Heart left ventricle (tissue), 16 donors: ENCODE measurements at regions of chr20 and their contacts with region 1.

Region 1: DNA sequence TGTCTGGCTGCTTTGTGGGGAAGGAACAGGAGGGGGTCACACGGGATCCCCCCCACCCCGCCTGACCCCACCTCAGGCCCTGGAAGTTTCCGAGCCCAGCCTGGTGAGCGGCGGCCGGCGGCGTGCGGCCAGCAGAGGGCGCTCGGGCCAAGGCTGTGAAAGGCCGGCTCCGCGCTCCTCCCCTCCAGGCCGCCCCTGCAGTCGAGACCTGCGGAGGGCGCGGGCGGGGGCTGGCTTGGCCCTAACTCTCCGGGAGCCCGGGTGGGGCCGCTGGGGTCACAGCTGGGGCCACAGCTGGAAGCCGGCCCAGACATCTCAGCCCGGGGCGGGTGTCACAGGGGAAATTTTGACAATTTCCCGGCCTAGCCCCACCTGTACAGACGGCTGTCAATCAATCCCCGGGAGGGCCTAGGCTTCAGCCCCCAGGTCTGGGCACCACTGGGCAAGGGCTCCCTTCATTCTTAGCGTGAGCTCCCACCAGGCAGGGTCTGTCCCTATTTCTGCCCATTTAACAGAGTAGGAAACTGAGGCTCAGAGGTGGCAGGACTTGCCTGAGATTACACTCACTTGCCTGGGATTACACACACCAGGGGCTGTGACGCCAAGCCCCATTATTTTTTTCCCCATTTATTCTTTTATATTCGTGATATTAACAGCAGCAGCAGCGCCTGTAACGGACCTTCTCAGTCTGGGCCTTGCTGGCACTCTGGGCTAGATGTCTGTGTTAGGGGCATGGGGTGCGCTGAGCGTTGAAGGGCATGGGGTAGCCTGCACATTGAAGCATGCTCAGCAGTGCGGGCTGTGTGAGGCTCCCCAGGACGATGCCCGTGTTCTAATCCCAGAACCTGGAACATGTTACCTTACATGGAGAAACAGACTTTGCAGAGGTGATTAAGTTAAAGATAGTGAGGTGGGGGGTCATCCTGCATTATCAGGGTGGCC is 23.0 kb downstream of the ZBP1 start:
- DNase-seq: peak; percentile 62 to 86 (median 74)
- ATAC-seq: peak; percentile 67 to 87 (median 80)
- H3K4me3 ChIP-seq: peak overlapping the region in 3 of 12 donors; percentile 20 to 27 (median 23)
- H3K27ac ChIP-seq: no peak overlapping the region
- H3K4me1 ChIP-seq: peaks cover 0 to 8% (median 5%) of the 10 kb centered on the region in 12 donors
- H3K27me3 ChIP-seq: peaks cover 0 to 5% (median 0%) of the 10 kb centered on the region in 9 donors
- CTCF ChIP-seq: peak; percentile 90 to 96 (median 94)
- POLR2A ChIP-seq: no peak

Region 2: DNA sequence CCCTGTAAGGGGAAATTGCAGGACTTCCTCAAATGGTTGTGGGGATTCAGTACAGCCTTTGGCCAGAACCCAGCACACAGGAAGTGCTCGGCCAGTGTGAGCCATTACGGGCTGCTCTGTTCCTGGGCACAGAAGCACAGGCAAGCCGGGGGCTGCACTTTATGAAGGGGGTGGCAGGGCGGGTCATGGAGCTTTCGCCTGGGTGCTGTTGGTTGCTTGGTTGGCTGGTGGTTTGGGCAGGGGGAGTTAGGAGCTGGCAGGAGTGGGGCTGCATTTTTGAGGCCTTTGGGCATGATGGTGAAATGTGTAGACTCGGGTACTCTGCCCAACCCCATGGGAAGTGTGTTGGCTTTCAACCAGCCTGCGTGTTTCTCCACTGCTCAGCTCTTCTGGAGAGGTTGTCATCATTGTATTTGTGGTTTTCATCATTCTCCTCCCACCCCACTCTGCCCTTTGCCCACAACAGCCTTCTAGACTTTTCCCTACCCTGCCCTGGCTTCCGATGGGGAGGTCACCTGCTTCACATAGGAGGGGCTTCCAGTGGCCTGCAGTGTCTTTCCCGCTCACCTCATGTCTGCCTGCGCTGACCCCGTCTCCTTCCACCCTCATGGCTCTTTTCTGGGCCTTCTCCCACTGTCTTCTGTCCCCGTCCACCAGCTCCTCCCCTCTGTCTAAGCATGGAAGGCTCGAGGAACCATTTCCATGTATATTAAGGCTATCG is 222.2 kb before region 1 on chr20:
- intact Hi-C with region 1: loop called in 7 of 10 experiments (anchors 5 to 10 kb)
- DNase-seq: peak in 3 of 5 donors; percentile 63 to 76 (median 64)
- ATAC-seq: peak; percentile 59 to 82 (median 70)
- H3K4me3 ChIP-seq: peak overlapping the region in 3 of 12 donors; percentile 13 to 38 (median 15)
- H3K27ac ChIP-seq: peak overlapping the region in 6 of 12 donors; percentile 2 to 78 (median 16)
- H3K4me1 ChIP-seq: peaks cover 0 to 26% (median 8%) of the 10 kb centered on the region in 12 donors
- H3K27me3 ChIP-seq: no peaks in the 10 kb centered on the region
- CTCF ChIP-seq: no peak
- POLR2A ChIP-seq: no peak

Region 3: GRCh38 chr20:57391074-57391554 is 206.2 kb before region 1 on chr20 and contains the start of gene RBM38:
- intact Hi-C with region 1: loop called in 3 of 10 experiments (anchors 10 kb)
- DNase-seq: peak; percentile 66 to 89 (median 75)
- ATAC-seq: peak; percentile 24 to 77 (median 62)
- H3K4me3 ChIP-seq: peak within 1 kb of the TSS; percentile 63 to 94 (median 75)
- H3K27ac ChIP-seq: peak within 1 kb of the TSS; percentile 80 to 97 (median 90)
- H3K4me1 ChIP-seq: peaks cover 10 to 70% (median 51%) of the 10 kb centered on the region in 12 donors
- H3K27me3 ChIP-seq: no peaks in the 10 kb centered on the region
- CTCF ChIP-seq: no peak
- POLR2A ChIP-seq: no peak
- total RNA-seq, gene RBM38: 45.6 to 97.9 (median 62.3) TPM

Region 4: GRCh38 chr20:58087193-58087858 is 490.1 kb after region 1 on chr20:
- intact Hi-C with region 1: loop called in 1 of 10 experiments (anchors 5 kb)
- DNase-seq: peak in 2 of 5 donors; percentile 38 to 47
- ATAC-seq: peak in 2 of 4 donors; percentile 26 to 72
- H3K4me3 ChIP-seq: no peak overlapping the region
- H3K27ac ChIP-seq: no peak overlapping the region
- H3K4me1 ChIP-seq: no peaks in the 10 kb centered on the region
- H3K27me3 ChIP-seq: peaks cover 0 to 7% (median 0%) of the 10 kb centered on the region in 9 donors
- CTCF ChIP-seq: peak; percentile 81 to 96 (median 88)
- POLR2A ChIP-seq: no peak

Region 5: DNA sequence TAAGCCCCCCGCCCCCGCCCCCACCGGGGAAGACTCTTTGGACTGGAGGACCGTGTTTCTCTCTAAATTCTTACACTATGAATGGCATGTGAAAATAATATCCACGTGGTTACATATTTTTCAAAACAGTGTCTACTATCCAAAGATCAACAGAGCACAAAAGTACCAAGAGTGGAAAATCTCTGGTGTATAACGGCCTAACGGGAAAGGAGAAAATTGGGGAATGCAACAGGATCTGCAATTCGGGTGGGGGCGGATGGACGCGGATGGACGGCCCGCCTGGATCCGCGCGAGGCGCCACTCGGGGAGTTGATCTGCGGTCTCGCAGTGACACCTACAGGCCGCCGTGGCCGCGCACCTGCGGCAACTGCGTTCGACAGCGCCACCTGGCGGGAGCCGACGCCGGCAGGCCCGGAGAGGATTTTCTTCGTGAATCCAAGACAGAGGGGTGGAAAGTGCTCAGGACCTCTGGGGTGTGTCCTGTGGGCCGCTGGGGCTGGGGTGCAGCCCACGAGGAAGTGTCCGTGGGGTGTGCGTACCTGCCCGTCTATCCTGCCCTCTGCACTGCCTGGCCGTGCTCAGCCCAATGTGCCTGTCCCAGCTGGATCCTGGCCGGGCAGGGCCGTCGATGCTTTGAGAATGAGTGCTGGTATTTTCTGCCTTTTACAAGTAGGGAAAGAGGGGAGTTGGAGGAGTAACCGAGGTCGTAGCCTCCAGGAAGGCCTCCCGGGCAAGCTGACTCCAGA is 612.6 kb after region 1 on chr20:
- intact Hi-C with region 1: loop called (anchors 1 to 2 kb)
- DNase-seq: peak; percentile 77 to 93 (median 85)
- ATAC-seq: peak; percentile 51 to 92 (median 86)
- H3K4me3 ChIP-seq: no peak overlapping the region
- H3K27ac ChIP-seq: no peak overlapping the region
- H3K4me1 ChIP-seq: peaks cover 0 to 6% (median 0%) of the 10 kb centered on the region in 12 donors
- H3K27me3 ChIP-seq: peaks cover 0 to 24% (median 7%) of the 10 kb centered on the region in 9 donors
- CTCF ChIP-seq: peak; percentile 100
- POLR2A ChIP-seq: no peak

Region 6: DNA sequence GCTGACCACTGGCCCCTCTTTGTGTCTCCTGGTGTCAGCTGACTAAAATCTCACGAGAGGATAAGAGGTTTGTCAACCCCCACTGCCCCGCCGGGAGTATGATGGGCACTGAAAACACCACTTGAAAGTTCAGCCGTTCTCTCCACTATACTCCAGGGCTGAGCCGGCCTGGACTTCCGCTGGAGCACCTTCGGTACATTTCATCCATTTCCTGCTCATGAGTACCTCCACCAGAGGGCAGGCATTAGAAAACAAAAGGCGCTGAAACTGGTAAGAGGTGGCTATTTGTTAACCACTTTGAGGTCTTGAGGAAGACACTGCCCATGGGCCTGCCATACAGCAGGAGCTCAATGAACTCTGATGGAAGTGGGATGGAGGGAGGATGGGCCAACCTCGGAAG is 649.1 kb after region 1 on chr20:
- intact Hi-C with region 1: no loop called
- DNase-seq: no peak
- ATAC-seq: peak in 1 of 4 donors; percentile 16
- H3K4me3 ChIP-seq: no peak overlapping the region
- H3K27ac ChIP-seq: no peak overlapping the region
- H3K4me1 ChIP-seq: no peaks in the 10 kb centered on the region
- H3K27me3 ChIP-seq: no peaks in the 10 kb centered on the region
- CTCF ChIP-seq: peak in 8 of 12 donors; percentile 10 to 33 (median 24)
- POLR2A ChIP-seq: no peak